Activated CD8-positive, alpha-beta T cell treated with anti-CD3 and anti-CD28 coated beads, Interleukin-2, amount 10 ng/mL, durations not matched to agents 7 days and 5 days (primary cell): ENCODE measurements at regions of chr17 and their contacts with region 1.

Region 1: GRCh38 chr17:35063514-35064223 is at the start of gene RFFL:
- DNase-seq: peak; percentile 92
- ATAC-seq: peak; percentile 99
- H3K4me3 Mint-ChIP-seq: peak within 1 kb of the TSS; percentile 48
- H3K27ac Mint-ChIP-seq: peak within 1 kb of the TSS; percentile 85
- H3K4me1 Mint-ChIP-seq: peaks cover 49% of the 10 kb centered on the region
- H3K27me3 Mint-ChIP-seq: no peaks in the 10 kb centered on the region
- total RNA-seq, gene RFFL: 26.4 to 29.1 TPM

Region 2: GRCh38 chr17:34917381-34917780 is 146.3 kb before region 1 on chr17:
- CTCF ChIA-PET with region 1: no interaction called
- POLR2A ChIA-PET with region 1: no interaction called
- DNase-seq: no peak
- ATAC-seq: no peak
- H3K4me3 Mint-ChIP-seq: no peak overlapping the region
- H3K27ac Mint-ChIP-seq: no peak overlapping the region
- H3K4me1 Mint-ChIP-seq: no peaks in the 10 kb centered on the region
- H3K27me3 Mint-ChIP-seq: no peaks in the 10 kb centered on the region

Region 3: GRCh38 chr17:34998205-34998604 is 65.5 kb before region 1 on chr17:
- CTCF ChIA-PET with region 1: interaction called, 28 read pairs
- POLR2A ChIA-PET with region 1: no interaction called
- DNase-seq: peak; percentile 84
- ATAC-seq: peak; percentile 95
- H3K4me3 Mint-ChIP-seq: no peak overlapping the region
- H3K27ac Mint-ChIP-seq: peak overlapping the region; percentile 30
- H3K4me1 Mint-ChIP-seq: peaks cover 11% of the 10 kb centered on the region
- H3K27me3 Mint-ChIP-seq: no peaks in the 10 kb centered on the region

Region 4: DNA sequence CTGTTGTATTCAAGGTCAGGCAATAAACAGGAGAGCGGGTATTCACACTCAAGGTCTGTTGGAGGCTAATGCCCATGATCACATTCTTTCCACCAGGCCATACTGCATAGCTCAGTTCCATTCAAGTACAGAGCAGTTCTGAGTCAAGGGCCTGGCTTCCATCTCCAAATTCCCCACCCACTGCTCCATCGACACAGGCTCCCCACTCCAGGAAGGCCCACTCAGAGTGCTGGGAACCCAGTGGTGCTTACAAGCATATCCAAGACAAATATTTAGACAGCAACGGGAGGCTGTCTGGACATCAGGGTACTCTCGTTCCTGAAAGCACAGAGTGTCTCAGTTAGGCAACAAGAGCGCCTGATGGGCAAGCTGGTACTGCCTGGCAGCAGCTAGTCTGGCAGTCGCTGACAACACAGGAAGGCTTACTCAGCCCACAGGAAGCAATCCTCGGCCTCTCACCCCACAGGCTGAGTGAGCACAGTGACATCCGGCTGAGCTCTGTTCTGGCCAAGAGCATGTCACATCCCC is 41.1 kb before region 1 on chr17:
- CTCF ChIA-PET with region 1: interaction called, 57 read pairs
- POLR2A ChIA-PET with region 1: interaction called, 12 read pairs
- DNase-seq: peak; percentile 87
- ATAC-seq: peak; percentile 100
- H3K4me3 Mint-ChIP-seq: peak overlapping the region; percentile 66
- H3K27ac Mint-ChIP-seq: peak overlapping the region; percentile 98
- H3K4me1 Mint-ChIP-seq: peaks cover 40% of the 10 kb centered on the region
- H3K27me3 Mint-ChIP-seq: no peaks in the 10 kb centered on the region

Region 5: DNA sequence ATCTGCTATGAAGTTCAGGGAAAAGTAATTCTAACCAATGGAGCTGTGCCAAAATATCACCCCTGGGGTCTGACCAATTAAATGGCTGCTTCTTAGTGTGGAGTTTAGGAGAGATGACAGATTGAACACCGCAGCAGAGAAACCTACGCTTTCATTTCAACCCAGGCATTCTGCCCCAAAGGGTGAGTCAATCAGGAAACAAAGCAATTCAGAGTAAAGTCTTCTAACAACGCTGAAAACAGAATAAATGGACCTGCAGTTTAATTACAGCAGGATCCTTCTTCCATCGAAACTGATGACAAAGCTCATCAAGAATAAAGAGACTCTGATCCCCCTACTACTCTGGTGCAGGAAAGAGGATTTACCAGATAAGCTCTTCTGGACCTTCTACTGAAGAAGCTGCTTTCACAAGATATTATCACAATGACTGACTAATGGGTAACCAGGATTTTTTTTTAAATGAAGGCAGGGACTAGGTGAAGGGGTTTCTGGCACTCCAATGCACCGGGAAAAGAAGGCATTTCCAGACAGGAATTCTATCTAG is 16.9 kb before region 1 on chr17:
- CTCF ChIA-PET with region 1: interaction called, 27 read pairs
- POLR2A ChIA-PET with region 1: interaction called, 13 read pairs
- DNase-seq: peak; percentile 78
- ATAC-seq: peak; percentile 95
- H3K4me3 Mint-ChIP-seq: peak overlapping the region; percentile 69
- H3K27ac Mint-ChIP-seq: peak overlapping the region; percentile 83
- H3K4me1 Mint-ChIP-seq: peaks cover 49% of the 10 kb centered on the region
- H3K27me3 Mint-ChIP-seq: no peaks in the 10 kb centered on the region

Region 6: GRCh38 chr17:35052780-35053179 is 10.9 kb before region 1 on chr17:
- CTCF ChIA-PET with region 1: interaction called, 27 read pairs
- POLR2A ChIA-PET with region 1: interaction called, 13 read pairs
- DNase-seq: no peak
- ATAC-seq: no peak
- H3K4me3 Mint-ChIP-seq: no peak overlapping the region
- H3K27ac Mint-ChIP-seq: no peak overlapping the region
- H3K4me1 Mint-ChIP-seq: peaks cover 45% of the 10 kb centered on the region
- H3K27me3 Mint-ChIP-seq: no peaks in the 10 kb centered on the region

Region 7: DNA sequence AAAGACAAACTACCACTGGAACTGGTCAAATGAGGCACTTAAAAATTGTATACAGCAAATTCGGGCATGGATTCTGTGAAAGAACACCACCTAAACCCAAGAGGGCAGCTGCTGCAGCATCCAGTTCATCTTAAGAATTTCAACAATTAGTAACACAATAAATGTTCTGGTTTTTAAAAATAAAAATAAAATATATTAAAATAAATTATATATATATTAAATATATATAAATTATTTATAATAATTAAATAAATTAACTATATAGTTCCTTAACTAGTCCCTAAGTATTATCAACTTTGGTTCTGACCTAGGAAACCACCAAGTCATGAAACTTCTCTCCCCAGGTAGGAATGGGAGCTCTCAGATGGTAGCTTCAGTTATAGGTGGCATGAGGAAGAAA is 13.2 kb after region 1 on chr17:
- CTCF ChIA-PET with region 1: interaction called, 30 read pairs
- POLR2A ChIA-PET with region 1: interaction called, 20 read pairs
- DNase-seq: no peak
- ATAC-seq: no peak
- H3K4me3 Mint-ChIP-seq: no peak overlapping the region
- H3K27ac Mint-ChIP-seq: no peak overlapping the region
- H3K4me1 Mint-ChIP-seq: peaks cover 68% of the 10 kb centered on the region
- H3K27me3 Mint-ChIP-seq: no peaks in the 10 kb centered on the region

Region 8: GRCh38 chr17:35082073-35082657 is 18.5 kb after region 1 on chr17:
- CTCF ChIA-PET with region 1: interaction called, 30 read pairs
- POLR2A ChIA-PET with region 1: interaction called, 20 read pairs
- DNase-seq: no peak
- ATAC-seq: no peak
- H3K4me3 Mint-ChIP-seq: peak overlapping the region; percentile 53
- H3K27ac Mint-ChIP-seq: peak overlapping the region; percentile 84
- H3K4me1 Mint-ChIP-seq: peaks cover 63% of the 10 kb centered on the region
- H3K27me3 Mint-ChIP-seq: no peaks in the 10 kb centered on the region

Region 9: GRCh38 chr17:35218915-35219314 is 155.2 kb after region 1 on chr17:
- CTCF ChIA-PET with region 1: no interaction called
- POLR2A ChIA-PET with region 1: no interaction called
- DNase-seq: no peak
- ATAC-seq: no peak
- H3K4me3 Mint-ChIP-seq: peak overlapping the region; percentile 66
- H3K27ac Mint-ChIP-seq: peak overlapping the region; percentile 89
- H3K4me1 Mint-ChIP-seq: peaks cover 60% of the 10 kb centered on the region
- H3K27me3 Mint-ChIP-seq: no peaks in the 10 kb centered on the region